Activated CD8-positive, alpha-beta T cell treated with anti-CD3 and anti-CD28 coated beads for 36 hours (primary cell): ENCODE measurements at regions of chr20 and their contacts with region 1.

Region 1: GRCh38 chr20:45373353-45374100 is 4.6 kb downstream of the TP53TG5 start:
- DNase-seq: peak; percentile 93
- ATAC-seq: peak; percentile 93
- H3K4me3 Mint-ChIP-seq: peak overlapping the region; percentile 77
- H3K27ac Mint-ChIP-seq: peak overlapping the region; percentile 83
- H3K4me1 Mint-ChIP-seq: peaks cover 29% of the 10 kb centered on the region
- H3K27me3 Mint-ChIP-seq: no peaks in the 10 kb centered on the region
- CTCF ChIP-seq: peak; percentile 96

Region 2: GRCh38 chr20:45128071-45128470 is 245.5 kb before region 1 on chr20:
- CTCF ChIA-PET with region 1: no interaction called
- POLR2A ChIA-PET with region 1: no interaction called
- intact Hi-C with region 1: no loop called
- DNase-seq: no peak
- ATAC-seq: no peak
- H3K4me3 Mint-ChIP-seq: no peak overlapping the region
- H3K27ac Mint-ChIP-seq: no peak overlapping the region
- H3K4me1 Mint-ChIP-seq: no peaks in the 10 kb centered on the region
- H3K27me3 Mint-ChIP-seq: peaks cover 23% of the 10 kb centered on the region
- CTCF ChIP-seq: no peak

Region 3: DNA sequence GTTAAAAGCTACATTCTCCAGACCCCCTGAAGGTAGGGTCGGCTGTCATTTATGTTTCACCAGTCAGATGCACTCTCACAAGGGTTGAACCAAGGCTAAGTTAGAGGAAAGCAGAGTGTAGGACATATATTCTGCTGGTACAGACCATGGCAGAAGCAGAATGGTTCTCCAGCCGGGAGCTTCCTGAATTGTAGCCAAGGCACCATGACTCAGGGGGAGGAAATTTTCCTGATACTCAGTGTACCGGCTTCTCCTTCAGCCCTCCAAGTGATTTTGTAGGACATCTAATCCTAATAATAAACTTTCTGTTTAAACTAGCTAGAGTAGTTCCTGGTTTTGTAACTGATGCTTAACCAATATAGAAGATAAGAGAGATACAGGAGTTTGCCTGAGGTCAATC is 105.0 kb before region 1 on chr20:
- CTCF ChIA-PET with region 1: no interaction called
- POLR2A ChIA-PET with region 1: no interaction called
- intact Hi-C with region 1: no loop called
- DNase-seq: no peak
- ATAC-seq: no peak
- H3K4me3 Mint-ChIP-seq: no peak overlapping the region
- H3K27ac Mint-ChIP-seq: no peak overlapping the region
- H3K4me1 Mint-ChIP-seq: no peaks in the 10 kb centered on the region
- H3K27me3 Mint-ChIP-seq: peaks cover 28% of the 10 kb centered on the region
- CTCF ChIP-seq: no peak

Region 4: GRCh38 chr20:45322952-45323383 is 50.6 kb before region 1 on chr20:
- CTCF ChIA-PET with region 1: interaction called, 14 read pairs
- POLR2A ChIA-PET with region 1: interaction called, 3 read pairs
- intact Hi-C with region 1: no loop called
- DNase-seq: peak; percentile 43
- ATAC-seq: no peak
- H3K4me3 Mint-ChIP-seq: no peak overlapping the region
- H3K27ac Mint-ChIP-seq: no peak overlapping the region
- H3K4me1 Mint-ChIP-seq: peaks cover 25% of the 10 kb centered on the region
- H3K27me3 Mint-ChIP-seq: no peaks in the 10 kb centered on the region
- CTCF ChIP-seq: no peak

Region 5: GRCh38 chr20:45362804-45363610 is 10.5 kb before region 1 on chr20 and contains the start of gene SYS1:
- CTCF ChIA-PET with region 1: interaction called, 151 read pairs
- POLR2A ChIA-PET with region 1: interaction called, 35 read pairs
- intact Hi-C with region 1: no loop called
- DNase-seq: peak; percentile 98
- ATAC-seq: peak; percentile 90
- H3K4me3 Mint-ChIP-seq: peak within 1 kb of the TSS; percentile 100
- H3K27ac Mint-ChIP-seq: peak within 1 kb of the TSS; percentile 98
- H3K4me1 Mint-ChIP-seq: peaks cover 48% of the 10 kb centered on the region
- H3K27me3 Mint-ChIP-seq: no peaks in the 10 kb centered on the region
- CTCF ChIP-seq: peak; percentile 89
- total RNA-seq, gene SYS1: 19.6 to 20.7 TPM

Region 6: DNA sequence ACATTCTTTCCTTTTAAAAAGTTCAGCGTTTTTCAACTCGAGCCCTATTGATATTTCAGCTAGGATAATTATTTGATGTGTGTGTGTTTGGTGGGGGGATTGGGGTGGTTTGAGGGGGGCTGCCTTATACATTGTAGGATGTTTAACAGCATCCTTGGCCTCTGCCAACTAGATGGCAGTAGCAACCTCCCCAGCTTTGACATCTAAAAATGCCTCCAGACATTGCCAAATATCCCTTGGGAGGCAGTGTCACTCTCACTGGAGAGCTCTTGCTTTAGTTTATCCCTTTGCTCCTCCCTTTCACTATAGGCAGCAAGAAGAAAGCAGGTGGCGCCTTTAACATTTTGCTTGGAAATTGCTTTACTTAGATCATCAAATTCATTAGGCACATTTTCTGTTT is 19.2 kb after region 1 on chr20:
- CTCF ChIA-PET with region 1: interaction called, 32 read pairs
- POLR2A ChIA-PET with region 1: no interaction called
- intact Hi-C with region 1: no loop called
- DNase-seq: no peak
- ATAC-seq: no peak
- H3K4me3 Mint-ChIP-seq: no peak overlapping the region
- H3K27ac Mint-ChIP-seq: no peak overlapping the region
- H3K4me1 Mint-ChIP-seq: peaks cover 13% of the 10 kb centered on the region
- H3K27me3 Mint-ChIP-seq: no peaks in the 10 kb centered on the region
- CTCF ChIP-seq: no peak

Region 7: DNA sequence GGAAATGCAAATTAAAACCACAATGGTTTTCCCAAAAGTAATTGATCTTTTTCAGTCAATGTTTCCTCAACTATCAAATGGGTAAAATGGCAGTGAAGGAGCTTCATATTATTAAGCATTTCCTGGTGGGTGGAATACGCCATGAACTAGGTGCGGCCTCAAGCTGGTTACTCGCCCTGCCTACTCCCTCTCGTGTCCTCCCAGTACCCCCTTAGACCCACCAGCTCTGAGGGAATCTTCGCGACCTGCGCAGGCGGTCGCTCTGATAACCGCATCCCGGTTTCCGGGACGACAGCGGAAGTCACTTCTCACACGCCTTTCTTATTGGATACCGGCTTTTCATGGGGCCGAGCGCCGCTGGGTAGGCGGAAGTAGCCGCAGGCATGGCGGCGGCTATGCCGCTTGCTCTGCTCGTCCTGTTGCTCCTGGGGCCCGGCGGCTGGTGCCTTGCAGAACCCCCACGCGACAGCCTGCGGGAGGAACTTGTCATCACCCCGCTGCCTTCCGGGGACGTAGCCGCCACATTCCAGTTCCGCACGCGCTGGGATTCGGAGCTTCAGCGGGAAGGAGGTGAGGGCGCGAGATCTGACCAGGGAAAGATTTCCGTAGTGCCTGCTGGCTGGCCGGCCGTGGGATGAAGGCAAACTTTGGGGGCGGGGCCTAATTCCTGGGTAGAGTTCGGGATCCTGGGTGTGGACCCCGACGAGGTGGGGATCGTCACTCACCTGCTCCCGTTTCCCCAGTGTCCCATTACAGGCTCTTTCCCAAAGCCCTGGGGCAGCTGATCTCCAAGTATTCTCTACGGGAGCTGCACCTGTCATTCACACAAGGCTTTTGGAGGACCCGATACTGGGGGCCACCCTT is 42.5 kb after region 1 on chr20 and contains the start of gene PIGT:
- CTCF ChIA-PET with region 1: interaction called, 53 read pairs
- POLR2A ChIA-PET with region 1: interaction called, 30 read pairs
- intact Hi-C with region 1: no loop called
- DNase-seq: peak; percentile 94
- ATAC-seq: peak; percentile 90
- H3K4me3 Mint-ChIP-seq: peak within 1 kb of the TSS; percentile 87
- H3K27ac Mint-ChIP-seq: peak within 1 kb of the TSS; percentile 95
- H3K4me1 Mint-ChIP-seq: peaks cover 33% of the 10 kb centered on the region
- H3K27me3 Mint-ChIP-seq: no peaks in the 10 kb centered on the region
- CTCF ChIP-seq: no peak
- total RNA-seq, gene PIGT: 43.7 to 47.7 TPM

Region 8: DNA sequence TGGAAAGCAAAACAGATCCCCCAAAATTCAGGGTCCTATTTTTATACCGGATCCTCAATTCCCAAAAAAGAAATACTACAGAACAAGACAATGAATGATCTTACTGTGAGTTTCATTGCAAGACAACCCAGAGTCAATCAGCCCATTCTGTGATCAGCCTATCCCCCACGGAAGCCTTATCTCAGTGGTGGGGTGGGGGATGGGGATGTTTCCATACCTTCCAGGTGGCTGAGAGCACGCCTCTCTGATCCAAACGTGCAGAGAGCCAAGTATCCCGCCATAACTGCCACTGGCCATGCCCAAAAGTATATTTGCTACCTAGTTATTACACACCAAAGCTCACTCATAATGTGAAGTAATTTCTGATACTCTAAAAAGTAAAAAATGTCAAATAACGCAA is 111.1 kb after region 1 on chr20:
- CTCF ChIA-PET with region 1: interaction called, 11 read pairs
- POLR2A ChIA-PET with region 1: no interaction called
- intact Hi-C with region 1: no loop called
- DNase-seq: no peak
- ATAC-seq: no peak
- H3K4me3 Mint-ChIP-seq: no peak overlapping the region
- H3K27ac Mint-ChIP-seq: no peak overlapping the region
- H3K4me1 Mint-ChIP-seq: no peaks in the 10 kb centered on the region
- H3K27me3 Mint-ChIP-seq: peaks cover 35% of the 10 kb centered on the region
- CTCF ChIP-seq: no peak

Region 9: GRCh38 chr20:45545754-45546453 is 172.4 kb after region 1 on chr20:
- CTCF ChIA-PET with region 1: no interaction called
- POLR2A ChIA-PET with region 1: no interaction called
- intact Hi-C with region 1: no loop called
- DNase-seq: no peak
- ATAC-seq: no peak
- H3K4me3 Mint-ChIP-seq: no peak overlapping the region
- H3K27ac Mint-ChIP-seq: no peak overlapping the region
- H3K4me1 Mint-ChIP-seq: no peaks in the 10 kb centered on the region
- H3K27me3 Mint-ChIP-seq: peaks cover 33% of the 10 kb centered on the region
- CTCF ChIP-seq: peak; percentile 25